ENCODE measurements at regions of chr1 and their contacts with region 1.

Region 1: DNA sequence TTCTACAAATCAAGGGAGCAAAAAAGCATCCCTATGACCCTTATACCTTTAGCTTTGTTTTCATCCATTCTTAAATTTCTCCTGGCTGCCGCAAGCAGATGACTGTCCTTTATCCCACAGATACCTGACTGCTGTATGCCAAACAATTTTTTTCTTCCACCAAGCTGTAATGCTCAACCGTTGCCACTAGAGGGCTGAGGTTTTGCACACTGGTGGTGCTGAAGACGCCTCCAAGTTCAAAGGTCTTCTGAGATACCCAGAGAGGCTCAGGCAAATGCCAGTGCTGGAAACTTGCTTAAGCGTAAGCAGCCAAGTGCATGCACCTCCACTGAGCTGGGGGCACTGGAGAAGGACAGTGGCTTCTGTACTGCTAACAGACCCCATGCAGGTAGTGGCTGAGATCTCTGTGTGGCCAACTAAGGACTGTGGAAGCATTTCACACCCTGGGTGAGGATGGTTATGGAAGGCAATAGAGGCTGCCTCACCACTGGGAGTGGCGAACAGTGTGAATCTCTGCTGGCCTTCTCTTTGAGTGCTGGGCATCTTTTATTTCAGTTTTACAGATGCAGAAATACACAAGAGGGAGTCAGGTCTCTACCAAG is 28.5 kb downstream of the CNIH3 start:
- DNase-seq: peak; percentile 17
- H3K4me3 ChIP-seq: no peak overlapping the region
- H3K27ac ChIP-seq: no peak overlapping the region
- H3K4me1 ChIP-seq: no peaks in the 10 kb centered on the region
- H3K27me3 ChIP-seq: no peaks in the 10 kb centered on the region
- CTCF ChIP-seq: peak; percentile 71 to 80 (median 76)
- POLR2A ChIP-seq: no peak

Region 2: DNA sequence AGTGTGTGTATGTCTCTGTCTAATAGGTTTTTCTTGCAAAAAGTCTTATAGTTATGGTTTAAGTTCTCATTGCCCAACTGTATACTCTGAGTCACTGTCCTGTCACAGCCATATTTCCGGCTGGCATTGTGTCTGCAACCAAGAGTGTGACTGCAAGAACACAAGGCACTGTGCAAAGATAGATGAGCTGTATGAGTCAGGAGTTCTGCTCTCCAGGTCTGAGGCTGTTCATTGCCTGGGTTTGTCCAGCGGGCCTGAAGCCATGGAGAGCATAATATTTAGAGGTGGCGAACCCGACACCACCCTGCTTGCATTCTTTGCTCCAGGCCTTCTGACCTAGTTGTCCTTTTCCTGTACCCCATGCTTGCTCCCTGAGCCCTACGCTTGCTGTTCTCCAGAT is 79.5 kb before region 1 on chr1:
- intact Hi-C with region 1: no loop called
- DNase-seq: no peak
- H3K4me3 ChIP-seq: no peak overlapping the region
- H3K27ac ChIP-seq: no peak overlapping the region
- H3K4me1 ChIP-seq: no peaks in the 10 kb centered on the region
- H3K27me3 ChIP-seq: no peaks in the 10 kb centered on the region
- CTCF ChIP-seq: no peak
- POLR2A ChIP-seq: no peak

Region 3: DNA sequence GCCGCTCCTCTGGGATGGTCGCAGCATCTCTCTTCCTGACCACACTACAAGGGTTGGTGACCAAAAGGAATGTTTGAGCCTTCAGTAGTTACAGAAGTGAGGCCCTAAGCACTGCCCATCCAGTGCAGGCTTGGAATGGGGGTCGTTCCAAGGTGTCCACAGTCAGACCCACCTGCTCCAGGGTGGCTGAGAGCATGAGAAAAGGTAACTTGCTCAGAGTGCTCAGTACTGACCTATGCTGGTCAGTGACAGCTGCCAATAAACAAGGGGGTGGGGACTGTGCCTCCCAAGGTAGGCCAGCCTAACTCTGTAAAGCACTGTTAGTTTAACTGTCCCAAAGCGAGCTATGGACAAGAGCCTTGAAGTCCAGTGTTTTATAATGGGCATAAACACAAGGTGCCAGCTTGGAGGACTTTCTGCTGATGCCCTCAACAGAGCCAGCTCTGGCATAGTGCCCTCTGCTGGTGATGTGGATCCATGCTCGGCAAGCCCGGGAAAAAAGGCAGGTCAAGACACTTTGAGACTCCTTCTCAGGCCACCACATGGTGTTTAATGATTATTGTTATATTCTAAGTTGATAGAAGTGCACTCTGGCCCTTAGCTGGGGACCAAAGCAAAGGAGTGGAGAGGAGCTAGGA is 206.7 kb after region 1 on chr1:
- intact Hi-C with region 1: loop called (anchors 2 kb)
- DNase-seq: peak; percentile 58
- H3K4me3 ChIP-seq: no peak overlapping the region
- H3K27ac ChIP-seq: no peak overlapping the region
- H3K4me1 ChIP-seq: no peaks in the 10 kb centered on the region
- H3K27me3 ChIP-seq: no peaks in the 10 kb centered on the region
- CTCF ChIP-seq: peak in 3 of 4 experiments; percentile 46 to 60 (median 55)
- POLR2A ChIP-seq: no peak

Region 4: DNA sequence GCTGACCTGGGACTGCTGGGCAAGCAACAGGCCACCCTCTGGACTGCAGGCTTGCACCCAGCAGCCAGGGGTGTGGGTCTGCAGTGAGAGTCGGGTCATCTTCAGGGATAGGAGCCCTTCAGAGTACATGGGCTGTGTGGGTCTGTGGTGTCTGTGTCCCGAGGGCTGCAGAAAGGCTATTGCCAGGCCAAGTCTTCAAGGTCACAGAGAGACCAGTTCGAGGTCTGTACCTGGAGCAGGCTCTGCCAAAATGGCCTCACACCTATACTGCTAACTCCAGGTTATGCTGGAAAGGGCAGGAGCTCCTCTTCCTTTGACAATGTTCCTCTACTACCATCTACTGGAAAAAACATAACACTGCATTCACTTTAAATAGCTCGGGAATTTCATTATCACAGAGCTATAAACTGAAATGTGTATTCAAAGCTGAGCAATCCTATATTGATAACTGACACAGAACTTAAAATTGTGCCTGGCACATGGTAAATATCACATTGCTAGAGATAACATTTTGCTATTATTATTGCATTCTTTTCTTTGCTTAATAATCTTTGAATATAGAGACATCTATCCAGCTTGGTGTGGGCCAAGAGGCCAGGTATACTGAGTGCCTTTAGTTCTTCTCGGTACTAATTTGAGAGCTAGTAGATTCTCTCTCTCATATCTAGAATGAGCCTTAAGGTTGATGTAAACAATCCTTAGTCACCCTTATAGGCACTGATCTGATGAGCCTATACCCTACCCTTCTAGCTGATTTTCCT is 277.9 kb after region 1 on chr1:
- intact Hi-C with region 1: loop called (anchors 5 kb)
- DNase-seq: no peak
- H3K4me3 ChIP-seq: no peak overlapping the region
- H3K27ac ChIP-seq: no peak overlapping the region
- H3K4me1 ChIP-seq: no peaks in the 10 kb centered on the region
- H3K27me3 ChIP-seq: no peaks in the 10 kb centered on the region
- CTCF ChIP-seq: peak; percentile 39 to 81 (median 75)
- POLR2A ChIP-seq: no peak